ENCODE measurements at regions of chr7 and their contacts with region 1.

Region 1: GRCh38 chr7:133265821-133266220 is 12.9 kb downstream of the EXOC4 start:
- DNase-seq: no peak
- H3K4me3 ChIP-seq: no peak overlapping the region
- H3K27ac ChIP-seq: no peak overlapping the region
- H3K4me1 ChIP-seq: no peaks in the 10 kb centered on the region
- H3K27me3 ChIP-seq: no peaks in the 10 kb centered on the region
- CTCF ChIP-seq: no peak
- POLR2A ChIP-seq: no peak

Region 2: DNA sequence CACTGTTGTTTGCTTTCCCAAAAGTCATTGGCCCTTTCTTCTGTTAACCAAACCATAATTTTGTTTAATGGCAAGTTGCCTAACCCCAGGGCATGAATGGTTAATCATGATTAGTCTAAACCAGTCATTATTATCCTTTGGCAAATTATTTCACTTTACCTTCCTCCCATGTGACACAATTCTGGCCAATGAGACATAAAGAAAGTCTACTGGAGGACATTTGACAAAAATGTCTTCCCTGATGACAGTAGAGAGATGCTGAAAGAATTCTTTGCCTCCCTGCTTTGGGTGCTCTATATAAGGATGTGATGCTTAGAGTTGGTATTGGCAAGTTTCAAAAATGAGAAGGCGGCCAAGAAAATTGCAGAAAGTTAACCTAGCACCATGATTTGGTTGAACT is 1811.3 kb before region 1 on chr7:
- intact Hi-C with region 1: no loop called
- DNase-seq: no peak
- H3K4me3 ChIP-seq: no peak overlapping the region
- H3K27ac ChIP-seq: no peak overlapping the region
- H3K4me1 ChIP-seq: no peaks in the 10 kb centered on the region
- H3K27me3 ChIP-seq: no peaks in the 10 kb centered on the region
- CTCF ChIP-seq: no peak
- POLR2A ChIP-seq: no peak

Region 3: GRCh38 chr7:134298902-134299683 is 1033.3 kb after region 1 on chr7:
- intact Hi-C with region 1: loop called (anchors 5 kb)
- DNase-seq: no peak
- H3K4me3 ChIP-seq: no peak overlapping the region
- H3K27ac ChIP-seq: no peak overlapping the region
- H3K4me1 ChIP-seq: no peaks in the 10 kb centered on the region
- H3K27me3 ChIP-seq: no peaks in the 10 kb centered on the region
- CTCF ChIP-seq: no peak
- POLR2A ChIP-seq: no peak